Activated CD4-positive, alpha-beta memory T cell treated with anti-CD3 and anti-CD28 coated beads for 36 hours (primary cell): ENCODE measurements at regions of chr14 and their contacts with region 1.

Region 1: GRCh38 chr14:51865953-51866747 is 5.7 kb downstream of the GNG2 start:
- DNase-seq: peak; percentile 46
- H3K4me3 Mint-ChIP-seq: no peak overlapping the region
- H3K27ac Mint-ChIP-seq: no peak overlapping the region
- H3K4me1 Mint-ChIP-seq: peaks cover 19% of the 10 kb centered on the region
- H3K27me3 Mint-ChIP-seq: no peaks in the 10 kb centered on the region

Region 2: DNA sequence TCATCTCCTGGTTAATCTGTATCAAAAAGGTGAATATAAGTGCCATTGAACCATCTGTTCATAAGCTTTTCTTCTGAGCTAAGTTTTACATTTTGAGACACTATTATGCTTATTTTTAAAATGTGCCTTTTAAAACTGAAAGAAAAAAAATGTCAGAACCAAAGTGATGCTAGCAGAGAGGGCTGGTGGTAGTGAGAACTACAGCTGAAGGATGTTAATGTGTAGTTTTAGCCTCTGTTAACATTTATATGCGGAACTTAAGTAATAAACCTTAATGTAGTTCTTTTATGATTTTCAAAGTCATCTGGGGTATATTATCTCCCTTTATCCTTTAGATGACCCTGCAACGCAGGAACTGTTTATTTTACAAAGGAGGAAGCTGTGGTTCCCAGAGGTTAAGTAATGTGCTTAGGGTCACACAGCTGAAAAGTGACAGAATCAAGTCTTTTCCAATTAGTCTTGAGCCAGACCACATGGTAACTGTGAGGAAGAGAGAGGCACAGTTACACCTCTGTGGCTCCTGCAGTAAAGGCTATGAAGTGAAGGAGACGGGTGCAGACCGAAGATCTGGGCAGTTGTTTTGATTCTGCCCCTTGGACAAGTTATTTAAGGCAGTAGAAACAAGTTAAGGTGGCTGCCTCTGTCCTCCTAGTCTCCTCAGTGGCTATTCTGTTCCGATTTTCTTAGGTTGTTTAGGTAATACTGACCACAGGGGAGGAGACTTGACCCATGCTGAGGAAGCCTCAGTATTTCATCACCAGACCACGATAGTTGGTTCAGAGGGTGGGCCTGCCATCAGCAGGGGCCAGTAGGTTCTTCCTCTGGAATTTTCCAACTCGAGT is 18.2 kb after region 1 on chr14:
- CTCF ChIA-PET with region 1: interaction called, 3 read pairs
- POLR2A ChIA-PET with region 1: interaction called, 5 read pairs
- intact Hi-C with region 1: loop called (anchors 2 kb)
- DNase-seq: no peak
- H3K4me3 Mint-ChIP-seq: peak overlapping the region; percentile 25
- H3K27ac Mint-ChIP-seq: peak overlapping the region; percentile 30
- H3K4me1 Mint-ChIP-seq: peaks cover 68% of the 10 kb centered on the region
- H3K27me3 Mint-ChIP-seq: no peaks in the 10 kb centered on the region